CD8-positive, alpha-beta memory T cell (primary cell): ENCODE measurements at regions of chr5 and their contacts with region 1.

Region 1: DNA sequence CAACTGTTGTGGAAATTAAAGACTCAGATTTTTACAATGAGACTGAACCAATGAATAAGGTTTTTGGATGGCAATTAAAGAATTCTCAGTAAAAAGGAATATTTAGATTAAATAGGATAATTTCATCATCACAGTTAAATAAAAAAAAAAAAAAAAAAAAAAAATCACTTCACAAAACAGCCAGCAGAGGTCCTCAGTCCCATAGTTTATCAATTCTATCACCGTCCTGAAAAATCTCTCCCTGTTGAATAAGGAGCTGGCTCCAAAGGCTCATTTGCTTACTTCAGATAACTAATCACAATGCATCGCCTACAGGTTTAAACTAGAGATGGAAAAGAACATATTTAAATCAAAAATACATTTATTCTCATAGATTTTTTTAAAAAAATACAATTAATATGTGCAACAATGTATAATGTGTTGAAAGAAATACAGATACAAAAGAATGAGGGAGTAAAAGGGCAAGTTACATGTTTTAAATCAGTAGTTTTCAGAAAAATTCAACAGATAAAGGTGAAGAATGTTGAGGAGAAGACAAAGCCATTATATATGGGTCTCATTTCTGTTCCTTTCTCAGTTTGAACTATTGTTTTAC is 175.8 kb upstream of the CHD1 start:
- DNase-seq: peak in 2 of 5 donors; percentile 3 to 13
- H3K4me3 ChIP-seq: no peak overlapping the region
- H3K4me3 Mint-ChIP-seq: no peak overlapping the region
- H3K27ac ChIP-seq: no peak overlapping the region
- H3K27ac Mint-ChIP-seq: no peak overlapping the region
- H3K4me1 ChIP-seq: no peaks in the 10 kb centered on the region
- H3K4me1 Mint-ChIP-seq: peaks cover 0 to 2% (median 1%) of the 10 kb centered on the region in 3 donors
- H3K27me3 ChIP-seq: no peaks in the 10 kb centered on the region
- H3K27me3 Mint-ChIP-seq: peaks cover 0 to 16% of the 10 kb centered on the region in 2 donors

Region 2: DNA sequence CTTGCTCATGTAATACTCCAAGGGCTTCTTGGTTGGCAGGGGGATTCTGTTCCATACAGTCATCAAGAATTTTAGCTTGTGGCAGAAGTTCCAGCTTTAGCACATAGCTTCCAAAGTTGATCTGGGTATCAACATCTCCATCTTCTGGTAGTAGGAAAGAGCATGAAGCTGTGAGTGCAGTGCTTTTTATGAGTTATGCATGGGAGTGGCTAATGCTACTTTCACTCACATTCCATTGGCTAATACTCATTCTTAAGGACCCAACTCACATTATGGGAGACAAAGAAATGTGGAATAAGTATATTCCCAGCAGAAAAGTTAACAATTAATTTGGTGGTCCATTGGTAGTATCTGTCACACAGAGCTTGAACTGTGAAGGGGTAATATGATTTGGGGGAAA is 18.3 kb after region 1 on chr5:
- CTCF ChIA-PET with region 1: interaction called, 3 read pairs
- POLR2A ChIA-PET with region 1: interaction called, 13 read pairs
- DNase-seq: no peak
- H3K4me3 ChIP-seq: no peak overlapping the region
- H3K4me3 Mint-ChIP-seq: no peak overlapping the region
- H3K27ac ChIP-seq: no peak overlapping the region
- H3K27ac Mint-ChIP-seq: no peak overlapping the region
- H3K4me1 ChIP-seq: no peaks in the 10 kb centered on the region
- H3K4me1 Mint-ChIP-seq: no peaks in the 10 kb centered on the region
- H3K27me3 ChIP-seq: no peaks in the 10 kb centered on the region
- H3K27me3 Mint-ChIP-seq: peaks cover 6 to 12% of the 10 kb centered on the region in 2 donors

Region 3: DNA sequence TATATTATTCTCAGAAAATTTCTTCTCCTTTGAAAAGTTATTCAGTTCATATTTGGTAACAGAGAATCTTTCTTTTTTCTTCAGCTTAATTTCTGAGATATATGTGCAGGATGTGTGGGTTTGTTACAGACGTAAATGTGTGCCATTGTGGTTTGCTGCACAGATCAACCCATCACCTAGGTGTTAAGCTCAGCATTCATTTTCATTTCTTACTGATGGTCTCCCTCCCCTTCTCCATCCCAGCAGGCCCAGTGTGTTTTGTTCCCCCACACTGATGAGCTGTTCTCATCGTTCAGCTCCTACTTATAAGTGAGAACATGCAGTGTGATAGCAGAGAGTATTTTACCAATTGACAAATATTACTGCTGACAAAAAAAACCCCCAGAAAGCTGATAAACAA is 154.2 kb after region 1 on chr5:
- CTCF ChIA-PET with region 1: no interaction called
- POLR2A ChIA-PET with region 1: no interaction called
- DNase-seq: peak in 1 of 5 donors; percentile 36
- H3K4me3 ChIP-seq: no peak overlapping the region
- H3K4me3 Mint-ChIP-seq: peak overlapping the region in 2 of 7 donors; percentile 2 to 16
- H3K27ac ChIP-seq: no peak overlapping the region
- H3K27ac Mint-ChIP-seq: peak overlapping the region in 6 of 8 donors; percentile 7 to 82 (median 62)
- H3K4me1 ChIP-seq: no peaks in the 10 kb centered on the region
- H3K4me1 Mint-ChIP-seq: peaks cover 0 to 2% (median 0%) of the 10 kb centered on the region in 3 donors
- H3K27me3 ChIP-seq: no peaks in the 10 kb centered on the region
- H3K27me3 Mint-ChIP-seq: peaks cover 0 to 2% of the 10 kb centered on the region in 2 donors